ENCODE measurements at regions of chr13 and their contacts with region 1.

Region 1: DNA sequence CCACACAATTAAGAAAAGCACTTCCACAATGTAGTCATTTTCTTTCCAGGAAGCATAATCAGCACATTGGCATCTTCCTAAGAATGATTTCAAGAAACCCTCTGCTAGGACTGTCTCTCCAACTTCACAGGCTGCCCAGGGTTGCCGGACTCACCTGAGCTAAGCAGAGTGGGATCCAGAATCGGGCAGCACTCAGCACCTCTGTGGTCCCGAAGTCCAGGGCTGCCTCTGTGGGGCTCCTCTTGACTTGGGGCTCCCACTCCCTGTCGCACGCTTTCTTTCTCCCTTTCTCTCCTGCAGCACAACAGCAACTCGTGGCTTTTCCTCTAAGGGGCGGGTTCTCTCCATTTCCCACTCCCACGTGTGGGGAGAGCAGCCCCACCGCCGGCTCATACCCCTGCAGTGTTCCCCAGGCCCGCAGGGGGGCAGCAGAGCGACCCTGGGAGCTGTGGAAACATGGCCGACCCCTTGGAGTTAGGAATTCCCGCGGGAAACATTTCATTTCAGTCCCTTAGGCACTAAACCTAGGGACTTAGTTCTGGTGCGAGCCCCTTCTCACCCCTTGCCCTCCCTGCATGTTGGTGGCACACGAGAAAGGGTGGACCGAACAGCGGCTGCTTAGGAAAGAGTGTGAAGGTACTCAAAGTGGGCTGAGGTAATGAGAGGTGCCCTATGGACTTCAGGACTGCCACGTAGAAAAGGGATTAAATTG is at the start of gene TMEM272:
- DNase-seq: peak; percentile 70 to 86 (median 84)
- ATAC-seq: peak; percentile 92
- H3K4me3 ChIP-seq: no peak within 1 kb of the TSS
- H3K27ac ChIP-seq: peak within 1 kb of the TSS; percentile 54; the same call in 1 of the 3 replicates
- H3K4me1 ChIP-seq: peaks cover 6 to 8% of the 10 kb centered on the region in 2 experiments; a peak in 3 of 5 replicates
- H3K27me3 ChIP-seq: no peaks in the 10 kb centered on the region
- CTCF ChIP-seq: peak; percentile 76 to 92 (median 79)
- EP300 ChIP-seq: no peak
- POLR2A ChIP-seq: no peak
- RAD21 ChIP-seq: peak; percentile 33 to 59
- polyA plus RNA-seq, gene TMEM272: 0.07 TPM in 1 of 2 experiments, not detected in the other

Region 2: GRCh38 chr13:51814825-51815650 is 30.0 kb before region 1 on chr13:
- CTCF ChIA-PET with region 1: no interaction called
- POLR2A ChIA-PET with region 1: no interaction called
- in situ Hi-C with region 1: no loop called
- intact Hi-C with region 1: loop called (anchors 1 kb)
- DNase-seq: peak; percentile 48 to 72 (median 57)
- ATAC-seq: peak; percentile 91
- H3K4me3 ChIP-seq: no peak overlapping the region
- H3K27ac ChIP-seq: no peak overlapping the region; the same call in 2 of the 3 replicates
- H3K4me1 ChIP-seq: peaks cover 6 to 16% of the 10 kb centered on the region in 2 experiments; a peak in 4 of 5 replicates
- H3K27me3 ChIP-seq: peaks cover 0 to 26% of the 10 kb centered on the region in 2 experiments; a peak in 3 of 5 replicates
- CTCF ChIP-seq: peak; percentile 67 to 80 (median 77)
- EP300 ChIP-seq: no peak
- POLR2A ChIP-seq: no peak
- RAD21 ChIP-seq: peak; percentile 54 to 75

Measured in K562 (cell line).